Left ventricle myocardium inferior (tissue), 1 donor: ENCODE measurements at regions of chr6 and their contacts with region 1.

Region 1: GRCh38 chr6:111888928-111889695 is 15.9 kb upstream of the FYN start:
- DNase-seq: peak; percentile 34
- H3K4me3 ChIP-seq: peak overlapping the region; percentile 48
- H3K27ac ChIP-seq: peak overlapping the region; percentile 53
- H3K4me1 ChIP-seq: peaks cover 7% of the 10 kb centered on the region
- H3K27me3 ChIP-seq: no peaks in the 10 kb centered on the region
- CTCF ChIP-seq: no peak

Region 2: GRCh38 chr6:111957623-111958315 is 68.7 kb after region 1 on chr6:
- intact Hi-C with region 1: no loop called
- DNase-seq: no peak
- H3K4me3 ChIP-seq: no peak overlapping the region
- H3K27ac ChIP-seq: no peak overlapping the region
- H3K4me1 ChIP-seq: no peaks in the 10 kb centered on the region
- H3K27me3 ChIP-seq: peaks cover 23% of the 10 kb centered on the region
- CTCF ChIP-seq: no peak

Region 3: DNA sequence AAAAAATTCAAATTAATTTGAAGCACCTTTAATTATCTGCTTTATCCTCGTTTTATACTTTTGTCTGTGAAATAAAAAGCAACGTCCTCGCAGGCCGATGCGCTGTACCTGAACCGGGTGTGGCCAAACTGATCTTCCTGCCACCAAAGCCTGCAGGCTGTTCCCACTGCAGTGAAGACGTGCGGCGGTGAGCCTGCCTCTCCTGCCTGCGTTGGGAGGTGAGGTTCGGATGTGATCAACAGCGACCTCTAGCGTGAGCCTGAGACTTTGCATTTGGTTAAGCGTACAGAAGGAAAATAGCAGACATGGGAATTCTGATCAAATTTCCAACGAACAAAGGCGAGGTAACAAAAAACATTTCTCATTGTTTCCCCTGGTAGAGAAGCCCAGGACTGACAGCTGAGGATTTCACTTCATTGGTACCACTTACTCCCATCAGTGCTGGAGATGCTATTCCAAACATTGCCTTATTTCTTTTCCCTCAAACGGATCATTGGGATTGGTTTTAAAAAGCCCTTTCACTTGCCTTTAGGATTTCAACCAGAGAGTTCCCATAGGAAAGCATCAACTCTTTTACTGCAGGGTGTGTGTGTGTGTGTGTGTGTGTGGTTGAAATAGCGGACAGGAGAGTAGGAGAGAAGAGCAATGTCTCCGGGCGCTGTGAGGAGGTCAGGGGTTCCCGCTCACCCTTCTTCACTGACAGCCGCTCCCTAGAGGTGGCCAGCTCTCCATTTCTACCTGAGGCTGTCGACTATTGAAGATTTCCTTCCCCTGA is 108.2 kb after region 1 on chr6:
- intact Hi-C with region 1: loop called (anchors 10 kb)
- DNase-seq: peak; percentile 74
- H3K4me3 ChIP-seq: peak overlapping the region; percentile 42
- H3K27ac ChIP-seq: peak overlapping the region; percentile 62
- H3K4me1 ChIP-seq: no peaks in the 10 kb centered on the region
- H3K27me3 ChIP-seq: no peaks in the 10 kb centered on the region
- CTCF ChIP-seq: peak; percentile 96